IMR-90 (cell line): ENCODE measurements at regions of chr18 and their contacts with region 1.

Region 1: DNA sequence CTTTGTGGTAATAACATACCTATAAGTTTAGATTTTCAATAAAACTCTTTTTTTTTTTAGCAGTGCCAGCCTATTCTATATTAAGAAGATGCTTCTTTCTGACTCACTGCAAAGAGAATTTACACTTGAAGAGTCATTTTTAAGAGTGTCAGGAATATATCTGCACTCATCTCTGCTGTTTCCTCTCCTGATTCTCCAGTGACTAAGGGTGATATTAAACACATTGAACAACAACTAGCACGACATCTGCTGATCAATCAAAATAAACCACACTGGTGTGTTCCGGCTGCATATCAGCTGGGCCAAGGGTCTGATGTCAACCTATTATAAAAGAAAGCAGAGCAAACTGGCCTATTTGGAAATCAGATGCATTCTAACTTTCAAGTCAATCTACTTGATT is 15.0 kb downstream of the RAB27B start:
- DNase-seq: peak; percentile 31
- ATAC-seq: peak; percentile 39; the same call in 1 of the 2 replicates
- H3K4me3 ChIP-seq: no peak overlapping the region
- H3K27ac ChIP-seq: no peak overlapping the region
- H3K4me1 ChIP-seq: peaks cover 3% of the 10 kb centered on the region
- H3K27me3 ChIP-seq: no peaks in the 10 kb centered on the region
- CTCF ChIP-seq: no peak
- POLR2A ChIP-seq: no peak
- RAD21 ChIP-seq: no peak

Region 2: DNA sequence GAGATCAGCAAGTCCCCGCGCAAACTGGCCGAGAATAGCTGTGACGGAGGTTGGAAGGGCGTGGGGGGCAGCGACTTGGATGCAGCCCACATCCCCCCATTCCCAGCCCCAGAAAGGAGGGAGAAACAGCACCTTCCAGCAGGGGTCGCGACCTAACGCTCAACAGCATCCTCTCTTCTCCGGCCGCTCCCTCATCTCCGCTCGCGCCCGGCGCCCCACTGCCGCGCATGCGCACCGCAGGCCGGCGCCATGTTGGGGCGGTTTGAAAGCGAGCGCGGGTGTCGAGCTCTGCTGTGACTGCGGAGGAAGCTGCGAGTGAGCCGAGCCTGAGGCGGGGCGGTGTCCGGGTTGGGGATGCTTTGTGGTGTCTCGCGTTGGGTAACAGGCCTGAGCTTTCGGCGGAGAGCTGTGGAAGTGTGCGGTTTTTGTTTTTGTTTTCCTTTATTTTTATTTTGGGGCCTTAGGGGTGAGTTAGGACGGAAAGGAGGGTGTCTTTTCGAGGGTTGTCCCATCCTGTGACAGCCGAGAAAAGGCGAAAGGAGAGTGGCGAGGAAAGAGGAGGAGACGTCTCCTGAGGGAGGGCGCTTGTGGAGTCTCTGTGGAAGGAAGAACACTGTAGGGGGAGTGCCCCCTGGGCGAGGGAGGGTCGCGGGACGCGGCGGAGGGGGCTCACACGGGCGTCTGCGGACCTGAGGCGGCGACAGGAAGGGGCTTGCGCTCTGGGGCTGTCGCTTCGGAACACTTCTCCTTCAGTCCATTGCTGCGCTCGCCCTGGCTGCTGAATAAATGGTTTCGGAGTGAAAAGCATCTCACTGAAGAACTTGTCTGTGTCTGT is 485.4 kb before region 1 on chr18 and contains the starts of genes C18orf54 and STARD6:
- CTCF ChIA-PET with region 1: no interaction called
- POLR2A ChIA-PET with region 1: no interaction called
- dilution Hi-C with region 1: no loop called
- in situ Hi-C with region 1: no loop called
- intact Hi-C with region 1: loop called (anchors 10 kb)
- DNase-seq: peak; percentile 85
- ATAC-seq: peak; percentile 94
- H3K4me3 ChIP-seq: peak within 1 kb of the TSS; percentile 68
- H3K27ac ChIP-seq: peak within 1 kb of the TSS; percentile 79
- H3K4me1 ChIP-seq: no peaks in the 10 kb centered on the region
- H3K27me3 ChIP-seq: no peaks in the 10 kb centered on the region
- CTCF ChIP-seq: 0 out of 2 replicates have a peak, but pooled peaks have one; percentile 16
- POLR2A ChIP-seq: peak; percentile 32; the same call in 1 of the 2 replicates
- RAD21 ChIP-seq: peak; percentile 10; the same call in 1 of the 2 replicates
- total RNA-seq, gene C18orf54: 3.0 and 5.6 TPM in 2 replicates
- total RNA-seq, gene STARD6: 0.28 TPM in 1 of 2 replicates, not detected in the other

Region 3: GRCh38 chr18:54828281-54828881 is 14.9 kb before region 1 on chr18 and contains the start of gene RAB27B:
- CTCF ChIA-PET with region 1: no interaction called
- POLR2A ChIA-PET with region 1: interaction called, 3 read pairs
- dilution Hi-C with region 1: no loop called
- in situ Hi-C with region 1: no loop called
- intact Hi-C with region 1: loop called (anchors 2 kb)
- DNase-seq: peak; percentile 85
- ATAC-seq: peak; percentile 89
- H3K4me3 ChIP-seq: peak within 1 kb of the TSS; percentile 57
- H3K27ac ChIP-seq: peak within 1 kb of the TSS; percentile 57
- H3K4me1 ChIP-seq: peaks cover 3% of the 10 kb centered on the region; the same call in 1 of the 2 replicates
- H3K27me3 ChIP-seq: no peaks in the 10 kb centered on the region; the same call in 1 of the 2 replicates
- CTCF ChIP-seq: no peak
- POLR2A ChIP-seq: no peak
- RAD21 ChIP-seq: no peak
- total RNA-seq, gene RAB27B: 1.3 and 1.7 TPM in 2 replicates